Naive thymus-derived CD4-positive, alpha-beta T cell (primary cell): ENCODE measurements at regions of chr22 and their contacts with region 1.

Region 1: GRCh38 chr22:19909350-19910179 is 32.0 kb upstream of the COMT start:
- DNase-seq: peak; percentile 61 to 82 (median 76)
- ATAC-seq: peak; percentile 94
- H3K4me3 ChIP-seq: no peak overlapping the region
- H3K4me3 Mint-ChIP-seq: peak overlapping the region in 2 of 10 donors; percentile 10 to 61
- H3K27ac ChIP-seq: no peak overlapping the region
- H3K27ac Mint-ChIP-seq: peak overlapping the region in 7 of 9 donors; percentile 41 to 85 (median 78)
- H3K4me1 ChIP-seq: peaks cover 0 to 8% of the 10 kb centered on the region in 2 donors
- H3K4me1 Mint-ChIP-seq: peaks cover 2 to 17% (median 13%) of the 10 kb centered on the region in 7 donors
- H3K27me3 ChIP-seq: no peaks in the 10 kb centered on the region
- H3K27me3 Mint-ChIP-seq: no peaks in the 10 kb centered on the region

Region 2: GRCh38 chr22:19730655-19731360 is 178.8 kb before region 1 on chr22:
- CTCF ChIA-PET with region 1: interaction called, 77 read pairs
- POLR2A ChIA-PET with region 1: interaction called, 8 read pairs
- intact Hi-C with region 1: loop called (anchors 1 kb)
- DNase-seq: peak; percentile 68 to 92 (median 83)
- ATAC-seq: peak; percentile 88
- H3K4me3 ChIP-seq: peak overlapping the region; percentile 64
- H3K4me3 Mint-ChIP-seq: peak overlapping the region; percentile 81 to 89 (median 85)
- H3K27ac ChIP-seq: peak overlapping the region; percentile 4
- H3K27ac Mint-ChIP-seq: peak overlapping the region in 5 of 9 donors; percentile 41 to 85 (median 48)
- H3K4me1 ChIP-seq: no peaks in the 10 kb centered on the region
- H3K4me1 Mint-ChIP-seq: peaks cover 0 to 5% (median 2%) of the 10 kb centered on the region in 7 donors
- H3K27me3 ChIP-seq: no peaks in the 10 kb centered on the region
- H3K27me3 Mint-ChIP-seq: peaks cover 0 to 12% (median 0%) of the 10 kb centered on the region in 5 donors

Region 3: DNA sequence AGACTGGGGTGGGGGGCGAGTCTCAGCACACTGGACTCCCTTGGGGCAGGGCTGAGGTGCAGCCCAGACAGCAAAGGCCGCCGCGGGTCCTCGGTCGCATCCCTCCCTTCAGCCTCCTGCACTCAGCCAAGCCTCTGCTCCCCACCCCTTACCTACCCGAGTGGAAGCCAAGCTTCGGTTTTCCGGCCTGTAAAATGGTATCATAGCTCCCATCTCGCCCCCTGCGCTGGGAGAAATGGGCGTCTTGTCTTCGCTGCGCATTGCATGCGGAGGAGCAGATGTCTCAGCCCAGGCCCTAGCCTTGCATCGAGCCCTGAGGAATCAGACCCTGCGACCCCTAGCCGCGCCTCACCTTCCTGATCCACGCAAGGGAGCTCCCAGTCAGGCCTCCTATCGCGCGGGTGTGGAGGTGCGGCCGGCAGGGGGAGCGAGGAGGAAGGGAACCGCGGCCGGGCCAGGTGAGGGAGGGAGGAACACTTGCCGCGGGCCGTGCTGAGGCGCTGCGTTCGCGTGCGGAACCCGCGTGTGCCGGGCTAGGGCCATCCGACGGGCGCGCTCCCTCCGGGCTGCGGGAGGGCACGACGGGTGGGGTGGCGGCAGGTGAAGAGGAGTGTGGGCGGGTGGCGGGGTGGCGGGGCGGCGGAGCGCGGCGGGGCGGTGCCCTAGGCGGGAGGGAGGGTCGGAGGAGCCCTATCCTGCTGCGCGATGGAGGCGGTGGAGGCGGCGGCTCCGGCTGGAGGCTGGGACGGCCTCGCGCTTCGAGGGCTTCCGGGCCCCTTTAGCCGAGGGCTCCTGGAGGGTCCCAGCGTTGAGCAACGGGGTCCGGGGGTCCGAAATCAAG is 153.1 kb before region 1 on chr22:
- CTCF ChIA-PET with region 1: interaction called, 19 read pairs
- POLR2A ChIA-PET with region 1: no interaction called
- intact Hi-C with region 1: loop called (anchors 1 kb)
- DNase-seq: peak; percentile 56 to 79 (median 70)
- ATAC-seq: peak; percentile 79
- H3K4me3 ChIP-seq: peak overlapping the region; percentile 39
- H3K4me3 Mint-ChIP-seq: peak overlapping the region; percentile 62 to 89 (median 74)
- H3K27ac ChIP-seq: no peak overlapping the region
- H3K27ac Mint-ChIP-seq: no peak overlapping the region
- H3K4me1 ChIP-seq: peaks cover 8 to 23% of the 10 kb centered on the region in 2 donors
- H3K4me1 Mint-ChIP-seq: peaks cover 19 to 41% (median 25%) of the 10 kb centered on the region in 7 donors
- H3K27me3 ChIP-seq: peaks cover 0 to 11% of the 10 kb centered on the region in 2 donors
- H3K27me3 Mint-ChIP-seq: peaks cover 39 to 67% (median 53%) of the 10 kb centered on the region in 5 donors

Region 4: GRCh38 chr22:19779685-19780268 is 129.8 kb before region 1 on chr22:
- CTCF ChIA-PET with region 1: no interaction called
- POLR2A ChIA-PET with region 1: no interaction called
- intact Hi-C with region 1: no loop called
- DNase-seq: no peak
- ATAC-seq: no peak
- H3K4me3 ChIP-seq: no peak overlapping the region
- H3K4me3 Mint-ChIP-seq: no peak overlapping the region
- H3K27ac ChIP-seq: no peak overlapping the region
- H3K27ac Mint-ChIP-seq: no peak overlapping the region
- H3K4me1 ChIP-seq: no peaks in the 10 kb centered on the region
- H3K4me1 Mint-ChIP-seq: peaks cover 5 to 19% (median 16%) of the 10 kb centered on the region in 7 donors
- H3K27me3 ChIP-seq: no peaks in the 10 kb centered on the region
- H3K27me3 Mint-ChIP-seq: peaks cover 0 to 19% (median 4%) of the 10 kb centered on the region in 5 donors

Region 5: DNA sequence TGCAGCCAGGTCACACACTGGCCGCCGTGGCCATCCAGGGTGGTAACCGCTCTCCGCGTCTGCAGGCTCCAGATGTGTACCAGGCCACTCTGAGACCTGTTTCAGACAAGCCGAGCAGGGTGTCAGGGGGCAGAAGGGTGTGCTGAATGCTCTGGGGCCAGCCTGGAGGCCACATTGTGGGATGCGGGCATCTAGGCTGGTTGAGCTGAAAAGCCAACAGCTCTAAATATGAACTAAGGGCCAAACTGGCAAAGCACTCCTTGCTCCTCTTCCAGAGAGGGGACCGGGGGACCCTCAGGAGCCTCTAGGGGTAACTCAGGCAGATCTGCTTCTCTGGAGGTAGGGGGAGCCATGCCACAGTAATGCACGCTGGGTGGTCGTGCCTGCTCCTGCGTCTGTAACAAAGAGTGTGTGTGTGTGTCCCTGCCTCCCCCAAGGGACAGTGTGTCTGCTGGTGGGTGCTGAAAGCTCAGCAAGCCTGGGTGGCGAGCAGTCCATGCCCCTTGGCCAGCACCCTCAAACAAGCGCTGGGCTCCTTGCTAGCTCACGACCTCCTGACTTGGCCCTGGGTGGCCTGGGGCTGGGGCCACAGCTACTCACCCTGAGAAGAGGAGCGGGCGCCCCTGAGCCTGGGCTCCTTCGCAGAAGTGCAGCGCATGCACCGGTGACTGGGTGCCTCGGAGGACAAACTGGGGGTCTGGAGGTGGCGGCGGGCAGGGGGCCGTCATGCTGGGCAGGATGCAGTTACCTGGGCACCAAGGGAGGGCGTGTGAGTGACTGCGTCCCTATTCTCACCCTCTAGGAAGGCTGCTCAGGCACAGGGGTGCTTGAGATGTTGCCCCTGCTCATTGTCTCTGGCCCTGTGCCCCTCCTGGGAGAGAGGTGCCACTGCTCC is 88.7 kb before region 1 on chr22:
- CTCF ChIA-PET with region 1: no interaction called
- POLR2A ChIA-PET with region 1: no interaction called
- intact Hi-C with region 1: loop called in 1 of 2 experiments (anchors 1 kb)
- DNase-seq: peak in 2 of 9 donors; percentile 4 to 15
- ATAC-seq: no peak
- H3K4me3 ChIP-seq: no peak overlapping the region
- H3K4me3 Mint-ChIP-seq: no peak overlapping the region
- H3K27ac ChIP-seq: no peak overlapping the region
- H3K27ac Mint-ChIP-seq: no peak overlapping the region
- H3K4me1 ChIP-seq: no peaks in the 10 kb centered on the region
- H3K4me1 Mint-ChIP-seq: peaks cover 0 to 16% (median 5%) of the 10 kb centered on the region in 7 donors
- H3K27me3 ChIP-seq: no peaks in the 10 kb centered on the region
- H3K27me3 Mint-ChIP-seq: no peaks in the 10 kb centered on the region

Region 6: DNA sequence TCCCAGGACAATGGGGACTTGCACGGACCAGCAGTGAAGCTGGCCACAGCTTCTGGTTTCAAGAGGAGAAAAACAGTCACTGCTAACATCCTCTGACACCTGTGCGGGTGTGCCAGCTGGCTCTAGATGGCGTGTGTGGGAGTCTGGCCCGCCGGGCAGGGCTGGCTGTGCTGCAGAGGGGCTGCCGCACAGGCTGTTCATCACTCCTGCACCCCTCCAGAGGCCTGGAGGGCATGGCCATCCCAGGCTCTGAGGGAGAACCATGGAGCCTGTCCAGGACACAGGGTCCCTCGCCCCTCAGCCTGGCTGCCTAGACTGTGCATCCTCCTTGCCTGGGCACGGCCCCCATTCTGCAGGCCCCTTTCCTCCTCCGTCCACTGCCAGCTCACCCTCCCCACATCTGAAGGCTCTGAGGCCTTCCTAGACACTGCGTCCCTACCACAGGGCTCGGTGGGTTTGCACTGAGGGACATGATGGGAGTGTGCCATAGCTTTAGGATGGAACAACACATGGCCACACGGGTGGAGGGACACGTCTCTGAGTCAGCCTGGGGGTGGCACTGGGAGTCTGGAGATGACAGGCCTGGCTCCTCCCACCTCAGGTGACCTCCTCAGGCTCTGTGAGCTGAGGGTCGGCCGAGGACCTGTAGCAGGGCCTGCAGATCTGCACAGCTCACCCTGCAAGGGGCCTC is 12.8 kb before region 1 on chr22:
- CTCF ChIA-PET with region 1: interaction called, 10 read pairs
- POLR2A ChIA-PET with region 1: interaction called, 4 read pairs
- intact Hi-C with region 1: no loop called
- DNase-seq: peak in 7 of 9 donors; percentile 30 to 55 (median 46)
- ATAC-seq: peak; percentile 36
- H3K4me3 ChIP-seq: no peak overlapping the region
- H3K4me3 Mint-ChIP-seq: peak overlapping the region in 8 of 10 donors; percentile 16 to 61 (median 48)
- H3K27ac ChIP-seq: peak overlapping the region; percentile 45
- H3K27ac Mint-ChIP-seq: peak overlapping the region in 8 of 9 donors; percentile 75 to 100 (median 92)
- H3K4me1 ChIP-seq: peaks cover 15 to 57% of the 10 kb centered on the region in 2 donors
- H3K4me1 Mint-ChIP-seq: peaks cover 18 to 61% (median 58%) of the 10 kb centered on the region in 7 donors
- H3K27me3 ChIP-seq: no peaks in the 10 kb centered on the region
- H3K27me3 Mint-ChIP-seq: no peaks in the 10 kb centered on the region

Region 7: DNA sequence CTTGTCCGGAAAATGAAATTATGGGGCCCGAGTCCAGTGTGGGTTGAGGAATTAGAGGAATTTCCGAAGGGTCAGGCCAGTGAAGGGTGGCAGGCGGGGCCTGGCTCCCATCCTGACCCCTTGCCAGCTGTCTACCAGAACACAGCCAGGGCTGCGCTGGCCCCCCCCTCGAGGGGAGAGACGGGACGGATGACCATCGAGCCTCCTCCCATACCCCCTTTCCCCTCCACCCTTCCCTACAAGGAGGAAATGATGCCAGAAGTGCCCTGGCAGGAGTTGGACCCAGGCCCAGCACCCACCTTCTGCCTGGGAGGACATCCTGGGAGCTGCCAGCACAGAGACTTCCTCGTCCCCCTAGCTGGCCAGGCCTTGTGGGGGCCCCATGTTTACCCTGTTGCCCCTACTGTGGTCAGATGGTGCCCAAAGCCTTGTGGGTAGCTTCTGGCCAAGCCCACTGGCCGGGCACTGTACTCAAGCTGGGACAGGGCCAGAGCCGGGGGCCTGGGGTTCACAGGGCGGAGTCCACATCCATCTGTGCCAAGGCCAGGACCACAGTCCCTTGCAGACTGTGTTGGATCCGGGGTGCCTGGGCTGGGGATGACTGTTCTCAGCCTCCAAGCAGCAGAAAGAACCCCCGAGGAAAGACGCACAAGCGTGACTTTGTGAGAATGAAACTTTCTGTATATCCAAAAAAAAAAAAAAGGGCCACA is 86.2 kb after region 1 on chr22:
- CTCF ChIA-PET with region 1: no interaction called
- POLR2A ChIA-PET with region 1: no interaction called
- intact Hi-C with region 1: no loop called
- DNase-seq: no peak
- ATAC-seq: no peak
- H3K4me3 ChIP-seq: no peak overlapping the region
- H3K4me3 Mint-ChIP-seq: no peak overlapping the region
- H3K27ac ChIP-seq: no peak overlapping the region
- H3K27ac Mint-ChIP-seq: no peak overlapping the region
- H3K4me1 ChIP-seq: no peaks in the 10 kb centered on the region
- H3K4me1 Mint-ChIP-seq: peaks cover 0 to 2% (median 0%) of the 10 kb centered on the region in 7 donors
- H3K27me3 ChIP-seq: no peaks in the 10 kb centered on the region
- H3K27me3 Mint-ChIP-seq: peaks cover 0 to 5% (median 0%) of the 10 kb centered on the region in 5 donors